Aorta (tissue), 5 donors: ENCODE measurements at regions of chr5 and their contacts with region 1.

Region 1: DNA sequence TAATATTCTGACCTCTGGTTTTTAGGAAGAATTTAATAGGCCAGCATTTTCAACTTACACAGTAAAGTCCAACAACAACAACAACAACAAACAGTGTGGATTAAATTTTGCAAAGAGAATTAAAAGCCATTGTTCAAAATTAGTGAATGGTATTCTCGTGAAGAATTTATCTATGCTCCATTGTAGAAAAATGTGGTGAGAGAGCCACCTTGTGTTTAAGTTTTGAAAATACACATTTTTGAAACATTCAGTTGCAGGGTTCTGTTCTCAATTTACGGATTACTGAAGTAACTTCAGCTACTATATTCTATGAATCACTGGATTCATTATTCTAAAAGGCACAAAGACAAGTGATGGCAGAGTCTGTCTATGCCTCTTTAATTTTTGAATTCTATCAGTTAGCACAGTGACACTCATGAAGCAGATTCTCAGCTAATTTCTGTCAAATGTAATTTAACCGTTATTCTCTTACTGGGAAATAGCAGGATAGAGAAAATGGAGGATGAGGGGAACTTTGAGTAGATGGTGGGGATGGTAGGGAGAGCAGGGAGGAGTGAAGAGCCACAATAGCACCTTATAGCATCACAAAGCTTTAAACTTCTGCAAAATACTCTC is 11.0 kb downstream of the CCDC152 start:
- DNase-seq: no peak
- ATAC-seq: peak; percentile 60
- H3K4me3 ChIP-seq: no peak overlapping the region
- H3K27ac ChIP-seq: no peak overlapping the region
- H3K4me1 ChIP-seq: no peaks in the 10 kb centered on the region
- H3K27me3 ChIP-seq: no peaks in the 10 kb centered on the region

Region 2: DNA sequence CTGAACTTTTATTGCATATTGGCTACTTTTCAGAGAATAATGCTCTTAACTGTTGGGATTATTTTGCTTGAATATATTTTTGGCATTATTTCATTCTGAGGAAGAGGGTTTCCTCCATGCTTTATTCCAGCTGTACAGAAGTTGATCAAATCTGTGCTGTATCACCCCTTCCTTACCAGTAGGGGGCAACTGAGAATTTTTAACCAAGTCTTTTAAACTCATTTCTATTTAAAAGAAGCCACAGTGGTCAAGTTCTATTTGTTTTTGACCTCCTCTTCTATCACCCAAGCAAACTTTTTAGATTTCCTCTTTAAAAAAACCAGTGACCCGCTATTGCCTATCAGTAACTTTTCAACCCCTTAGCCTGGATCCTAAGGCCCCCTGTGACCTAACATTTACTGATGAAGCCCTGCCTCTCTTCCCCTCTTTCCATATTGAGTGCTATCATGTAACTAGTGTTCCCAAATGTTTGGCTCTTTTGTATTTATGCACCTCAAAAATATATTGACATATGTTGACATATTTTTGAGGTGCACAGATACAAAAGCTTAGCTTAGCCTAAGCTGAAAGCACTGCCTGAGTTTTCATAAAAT is 761.9 kb before region 1 on chr5:
- intact Hi-C with region 1: loop called in 1 of 2 experiments (anchors 5 kb)
- DNase-seq: no peak
- ATAC-seq: no peak
- H3K4me3 ChIP-seq: no peak overlapping the region
- H3K27ac ChIP-seq: no peak overlapping the region
- H3K4me1 ChIP-seq: no peaks in the 10 kb centered on the region
- H3K27me3 ChIP-seq: no peaks in the 10 kb centered on the region

Region 3: GRCh38 chr5:42168091-42168670 is 599.4 kb before region 1 on chr5:
- intact Hi-C with region 1: no loop called
- DNase-seq: no peak
- ATAC-seq: no peak
- H3K4me3 ChIP-seq: no peak overlapping the region
- H3K27ac ChIP-seq: no peak overlapping the region
- H3K4me1 ChIP-seq: no peaks in the 10 kb centered on the region
- H3K27me3 ChIP-seq: no peaks in the 10 kb centered on the region

Region 4: GRCh38 chr5:42828671-42829070 is 61.1 kb after region 1 on chr5:
- intact Hi-C with region 1: no loop called
- DNase-seq: no peak
- ATAC-seq: no peak
- H3K4me3 ChIP-seq: no peak overlapping the region
- H3K27ac ChIP-seq: no peak overlapping the region
- H3K4me1 ChIP-seq: no peaks in the 10 kb centered on the region
- H3K27me3 ChIP-seq: no peaks in the 10 kb centered on the region